ENCODE measurements at regions of chr3 and their contacts with region 1.

Region 1: DNA sequence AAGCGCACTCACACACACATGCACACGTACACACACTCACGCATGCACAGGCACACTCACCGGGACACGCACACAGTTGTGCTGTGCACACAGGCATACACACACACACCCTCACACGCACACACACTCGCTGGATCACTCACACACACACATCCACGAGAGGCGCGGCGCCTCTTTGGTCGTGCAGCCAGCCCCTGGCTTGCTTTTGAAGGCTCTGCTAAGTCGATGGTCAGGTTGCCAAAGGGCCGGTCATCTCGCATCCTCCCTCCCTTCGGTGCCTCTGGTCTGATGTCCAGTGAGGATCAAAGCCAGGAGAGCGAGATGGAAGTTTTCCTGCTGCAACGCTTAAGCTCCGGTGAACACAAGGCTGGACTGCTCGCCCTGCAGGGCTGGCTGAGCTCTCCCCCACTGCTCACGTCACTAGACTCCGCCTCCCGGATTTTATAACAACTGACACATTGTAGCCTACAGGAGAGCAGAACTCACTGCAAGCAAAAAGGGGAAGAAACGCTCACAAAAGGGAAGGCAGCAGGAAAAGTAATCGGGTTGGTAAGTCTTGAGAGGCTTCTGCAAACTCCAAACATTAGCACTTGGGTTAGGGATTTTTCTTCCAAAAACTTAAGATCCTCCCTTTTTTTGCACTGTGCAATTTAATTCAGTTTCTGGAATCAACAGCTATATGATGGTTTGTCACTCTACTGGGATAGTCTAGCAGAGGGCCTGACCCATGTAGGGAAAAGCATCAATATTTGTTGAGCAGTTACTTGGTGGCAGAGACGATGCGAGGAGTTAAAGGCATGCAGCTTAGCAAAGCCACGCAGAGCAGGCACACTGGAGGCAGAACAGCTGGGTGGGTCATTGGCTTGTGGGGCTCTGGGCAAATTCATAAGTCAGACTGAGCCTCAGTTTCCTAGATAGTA is at the start of gene SRGAP3:
- DNase-seq: peak; percentile 87
- CTCF ChIP-seq: peak; percentile 23

Region 2: GRCh38 chr3:9224490-9224889 is 25.0 kb before region 1 on chr3:
- CTCF ChIA-PET with region 1: interaction called, 10 read pairs
- POLR2A ChIA-PET with region 1: no interaction called
- DNase-seq: peak; percentile 77
- CTCF ChIP-seq: peak; percentile 39

Measured in GM10248 (cell line).